Ovary (tissue), 10 donors: ENCODE measurements at regions of chr1 and their contacts with region 1.

Region 1: DNA sequence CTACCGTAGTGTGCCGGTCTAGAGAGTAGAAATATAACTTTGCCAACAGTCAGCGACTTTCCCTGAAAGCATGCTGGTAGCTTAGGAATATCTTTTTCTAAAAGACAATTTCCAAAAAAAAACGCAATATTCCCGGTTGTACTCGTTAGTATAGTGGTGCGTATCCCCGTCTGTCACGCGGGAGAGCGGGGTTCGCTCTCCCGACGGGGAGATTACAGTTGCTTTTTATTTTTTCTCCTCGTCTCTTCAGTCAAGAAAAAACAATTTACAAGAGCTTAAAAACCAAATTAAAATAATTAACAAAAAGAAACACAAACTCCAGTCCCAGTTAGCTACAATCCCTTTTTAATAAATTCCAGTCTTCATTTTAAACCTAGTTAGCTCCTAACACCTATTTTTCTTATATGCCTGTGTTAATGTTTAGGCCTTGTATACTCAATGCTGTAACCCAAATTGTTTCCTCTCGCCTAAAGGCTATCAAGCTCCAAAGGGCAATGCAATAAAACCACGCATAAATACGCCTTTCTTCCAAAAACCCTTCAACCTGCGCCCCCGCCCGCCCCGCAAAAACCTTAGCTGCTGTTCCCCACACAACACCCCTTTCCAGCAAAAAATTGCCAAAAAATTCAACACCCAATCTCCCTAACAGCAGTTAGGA is 7.8 kb downstream of the HSPA6 start:
- DNase-seq: no peak
- H3K4me3 ChIP-seq: peak overlapping the region; percentile 87
- H3K27ac ChIP-seq: peak overlapping the region in 1 of 2 donors; percentile 3
- H3K4me1 ChIP-seq: no peaks in the 10 kb centered on the region
- H3K27me3 ChIP-seq: no peaks in the 10 kb centered on the region
- CTCF ChIP-seq: no peak
- EP300 ChIP-seq: no peak
- POLR2A ChIP-seq: no peak

Region 2: GRCh38 chr1:161399257-161399998 is 132.7 kb before region 1 on chr1:
- intact Hi-C with region 1: loop called in 2 of 4 experiments (anchors 10 kb)
- DNase-seq: peak; percentile 86 to 95 (median 93)
- H3K4me3 ChIP-seq: peak overlapping the region; percentile 92
- H3K27ac ChIP-seq: peak overlapping the region; percentile 100
- H3K4me1 ChIP-seq: peaks cover 4% of the 10 kb centered on the region
- H3K27me3 ChIP-seq: no peaks in the 10 kb centered on the region
- CTCF ChIP-seq: peak in 2 of 3 donors; percentile 41 to 48
- EP300 ChIP-seq: peak; percentile 69
- POLR2A ChIP-seq: peak; percentile 69

Region 3: GRCh38 chr1:161486806-161487741 is 45.0 kb before region 1 on chr1:
- intact Hi-C with region 1: no loop called
- DNase-seq: peak in 1 of 5 donors; percentile 55
- H3K4me3 ChIP-seq: no peak overlapping the region
- H3K27ac ChIP-seq: no peak overlapping the region
- H3K4me1 ChIP-seq: no peaks in the 10 kb centered on the region
- H3K27me3 ChIP-seq: no peaks in the 10 kb centered on the region
- CTCF ChIP-seq: peak in 2 of 3 donors; percentile 21 to 27
- EP300 ChIP-seq: no peak
- POLR2A ChIP-seq: no peak